Endothelial cell of umbilical vein (primary cell): ENCODE measurements at regions of chr9 and their contacts with region 1.

Region 1: GRCh38 chr9:124047251-124047672 is 35.7 kb downstream of the LHX2 start:
- DNase-seq: no peak
- H3K4me3 ChIP-seq: no peak overlapping the region
- H3K27ac ChIP-seq: no peak overlapping the region
- H3K4me1 ChIP-seq: peaks cover 8% of the 10 kb centered on the region
- H3K27me3 ChIP-seq: peaks cover 0 to 2% of the 10 kb centered on the region in 2 experiments
- CTCF ChIP-seq: no peak
- POLR2A ChIP-seq: no peak

Region 2: GRCh38 chr9:124079176-124079925 is 32.1 kb after region 1 on chr9:
- CTCF ChIA-PET with region 1: no interaction called
- POLR2A ChIA-PET with region 1: no interaction called
- dilution Hi-C with region 1: no loop called
- intact Hi-C with region 1: loop called (anchors 2 kb)
- DNase-seq: peak; percentile 33
- H3K4me3 ChIP-seq: no peak overlapping the region
- H3K27ac ChIP-seq: peak overlapping the region; percentile 47
- H3K4me1 ChIP-seq: peaks cover 22% of the 10 kb centered on the region
- H3K27me3 ChIP-seq: no peaks in the 10 kb centered on the region
- CTCF ChIP-seq: no peak
- POLR2A ChIP-seq: no peak